Activated CD8-positive, alpha-beta T cell treated with anti-CD3 and anti-CD28 coated beads for 36 hours (primary cell): ENCODE measurements at regions of chr3 and their contacts with region 1.

Region 1: GRCh38 chr3:190585805-190586630 is 72.1 kb downstream of the IL1RAP start:
- DNase-seq: peak; percentile 87
- ATAC-seq: peak; percentile 88
- H3K4me3 Mint-ChIP-seq: peak overlapping the region; percentile 55
- H3K27ac Mint-ChIP-seq: peak overlapping the region; percentile 96
- H3K4me1 Mint-ChIP-seq: peaks cover 46% of the 10 kb centered on the region
- H3K27me3 Mint-ChIP-seq: no peaks in the 10 kb centered on the region
- CTCF ChIP-seq: no peak

Region 2: GRCh38 chr3:190513409-190514162 is 72.4 kb before region 1 on chr3 and contains the start of gene IL1RAP:
- CTCF ChIA-PET with region 1: interaction called, 6 read pairs
- POLR2A ChIA-PET with region 1: interaction called, 4 read pairs
- intact Hi-C with region 1: loop called (anchors 2 kb)
- DNase-seq: peak; percentile 87
- ATAC-seq: peak; percentile 92
- H3K4me3 Mint-ChIP-seq: peak within 1 kb of the TSS; percentile 83
- H3K27ac Mint-ChIP-seq: peak within 1 kb of the TSS; percentile 76
- H3K4me1 Mint-ChIP-seq: peaks cover 35% of the 10 kb centered on the region
- H3K27me3 Mint-ChIP-seq: no peaks in the 10 kb centered on the region
- CTCF ChIP-seq: peak; percentile 45
- total RNA-seq, gene IL1RAP: 18.8 to 20.2 TPM

Region 3: DNA sequence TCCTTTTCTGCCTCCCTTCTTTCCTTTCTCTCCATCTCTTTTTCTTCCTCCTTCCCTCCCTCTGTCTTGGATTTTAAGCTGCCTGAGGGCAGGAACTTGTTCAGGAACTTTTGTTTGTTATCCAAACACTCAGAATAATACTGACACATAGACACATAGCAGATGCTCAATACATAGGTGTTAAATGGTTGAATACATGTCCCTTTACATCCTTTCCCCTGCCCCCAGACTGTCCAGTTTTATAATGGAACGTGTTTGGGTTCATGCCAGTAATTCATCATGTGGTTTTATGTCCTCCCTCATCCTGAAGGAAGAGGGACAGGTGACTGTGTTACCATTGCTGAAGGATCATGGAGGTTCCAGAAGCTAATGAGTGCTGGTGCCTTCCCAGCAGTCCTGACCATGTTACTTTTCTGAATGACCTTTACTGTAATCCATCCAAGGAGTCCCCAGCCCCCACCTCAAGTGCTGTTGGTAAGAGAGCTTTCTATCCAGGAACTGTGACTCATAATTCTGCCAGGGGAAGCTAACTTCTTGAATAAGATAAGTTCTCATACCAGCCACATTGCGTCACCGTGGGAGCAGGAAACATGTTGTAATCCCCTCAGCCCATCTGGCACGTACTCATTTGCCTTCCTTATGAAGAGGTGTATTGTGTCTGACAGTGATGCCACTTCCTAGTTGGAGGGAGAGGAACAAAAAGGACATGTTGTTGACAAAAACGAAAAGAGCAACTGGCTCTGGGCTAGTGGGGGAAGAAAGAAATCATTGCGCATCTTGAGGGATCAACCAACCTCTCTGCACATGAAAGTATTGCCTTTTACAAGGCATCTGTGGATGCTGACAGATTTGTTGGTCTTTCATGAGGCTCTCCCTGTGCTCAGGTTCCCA is 19.7 kb before region 1 on chr3:
- CTCF ChIA-PET with region 1: interaction called, 3 read pairs
- POLR2A ChIA-PET with region 1: interaction called, 4 read pairs
- intact Hi-C with region 1: loop called (anchors 1 kb)
- DNase-seq: peak; percentile 95
- ATAC-seq: peak; percentile 90
- H3K4me3 Mint-ChIP-seq: no peak overlapping the region
- H3K27ac Mint-ChIP-seq: peak overlapping the region; percentile 88
- H3K4me1 Mint-ChIP-seq: peaks cover 71% of the 10 kb centered on the region
- H3K27me3 Mint-ChIP-seq: no peaks in the 10 kb centered on the region
- CTCF ChIP-seq: no peak

Region 4: DNA sequence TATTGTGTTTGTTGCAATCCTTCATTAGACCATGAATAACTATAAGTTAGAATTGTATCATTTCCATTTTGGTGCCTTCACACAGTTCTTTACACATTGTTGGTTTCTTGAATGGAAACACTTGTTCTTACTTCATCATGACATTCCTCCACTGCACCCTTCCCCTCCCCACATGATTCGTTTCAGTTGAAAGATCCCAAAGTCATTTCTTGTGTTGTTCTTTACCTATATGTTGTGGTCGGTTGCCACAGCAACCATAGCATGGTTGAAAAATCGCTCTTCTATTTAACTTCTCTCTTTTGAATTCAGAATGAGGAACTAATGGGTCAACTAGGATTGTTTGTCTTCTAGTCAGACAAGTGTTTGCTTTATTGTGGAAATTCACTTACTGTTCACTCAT is 31.2 kb after region 1 on chr3:
- CTCF ChIA-PET with region 1: interaction called, 4 read pairs
- POLR2A ChIA-PET with region 1: no interaction called
- intact Hi-C with region 1: loop called (anchors 1 kb)
- DNase-seq: peak; percentile 72
- ATAC-seq: peak; percentile 31
- H3K4me3 Mint-ChIP-seq: no peak overlapping the region
- H3K27ac Mint-ChIP-seq: peak overlapping the region; percentile 86
- H3K4me1 Mint-ChIP-seq: peaks cover 63% of the 10 kb centered on the region
- H3K27me3 Mint-ChIP-seq: no peaks in the 10 kb centered on the region
- CTCF ChIP-seq: no peak

Region 5: DNA sequence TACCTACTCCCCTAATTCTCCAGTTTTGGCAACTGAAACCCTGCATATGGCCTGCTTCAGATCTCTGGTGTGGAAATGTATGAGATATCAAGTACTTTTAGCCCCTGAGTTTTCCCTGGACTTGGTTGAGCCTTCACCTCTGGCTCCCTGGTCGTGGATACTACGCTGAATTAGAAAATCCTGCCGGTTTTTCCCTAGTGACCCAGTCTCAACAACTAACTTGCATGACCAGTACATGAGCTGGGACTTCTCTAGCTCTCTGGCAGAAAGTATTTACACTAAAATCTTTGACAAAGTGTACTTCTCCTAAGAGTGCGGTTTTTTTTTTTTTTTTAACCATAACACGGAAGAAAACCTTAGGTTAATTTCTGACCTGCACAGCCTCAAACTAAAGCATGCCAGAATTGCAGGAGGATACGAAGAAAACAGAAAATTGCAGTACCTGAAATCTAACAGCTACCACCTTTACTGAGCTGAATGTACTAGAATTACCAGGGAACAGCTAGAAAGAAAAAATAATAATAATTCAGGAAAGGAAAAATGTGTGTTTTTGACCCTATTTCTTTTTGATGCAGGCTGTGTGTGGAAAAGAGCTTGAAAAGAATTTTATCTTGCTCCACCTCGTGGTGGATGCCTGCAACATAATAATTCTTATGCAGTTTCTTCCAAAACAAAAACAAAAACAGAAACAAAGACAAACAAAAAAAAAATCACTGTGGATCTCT is 110.9 kb after region 1 on chr3:
- CTCF ChIA-PET with region 1: interaction called, 3 read pairs
- POLR2A ChIA-PET with region 1: no interaction called
- intact Hi-C with region 1: loop called (anchors 5 kb)
- DNase-seq: peak; percentile 7
- ATAC-seq: no peak
- H3K4me3 Mint-ChIP-seq: no peak overlapping the region
- H3K27ac Mint-ChIP-seq: no peak overlapping the region
- H3K4me1 Mint-ChIP-seq: no peaks in the 10 kb centered on the region
- H3K27me3 Mint-ChIP-seq: peaks cover 25% of the 10 kb centered on the region
- CTCF ChIP-seq: peak; percentile 64

Region 6: GRCh38 chr3:191383124-191383523 is 797.1 kb after region 1 on chr3:
- CTCF ChIA-PET with region 1: no interaction called
- POLR2A ChIA-PET with region 1: no interaction called
- intact Hi-C with region 1: no loop called
- DNase-seq: no peak
- ATAC-seq: no peak
- H3K4me3 Mint-ChIP-seq: no peak overlapping the region
- H3K27ac Mint-ChIP-seq: no peak overlapping the region
- H3K4me1 Mint-ChIP-seq: peaks cover 5% of the 10 kb centered on the region
- H3K27me3 Mint-ChIP-seq: no peaks in the 10 kb centered on the region
- CTCF ChIP-seq: no peak